IMR-90 (cell line): ENCODE measurements at regions of chr9 and their contacts with region 1.

Region 1: GRCh38 chr9:15873569-15874177 is 320.8 kb downstream of the CCDC171 start:
- DNase-seq: peak; percentile 74
- ATAC-seq: peak; percentile 70; the same call in 1 of the 2 replicates
- H3K4me3 ChIP-seq: no peak overlapping the region
- H3K27ac ChIP-seq: no peak overlapping the region
- H3K4me1 ChIP-seq: no peaks in the 10 kb centered on the region; the same call in 1 of the 2 replicates
- H3K27me3 ChIP-seq: no peaks in the 10 kb centered on the region
- CTCF ChIP-seq: peak; percentile 82
- POLR2A ChIP-seq: no peak
- RAD21 ChIP-seq: peak; percentile 87

Region 2: GRCh38 chr9:15231788-15232635 is 641.7 kb before region 1 on chr9:
- CTCF ChIA-PET with region 1: no interaction called
- POLR2A ChIA-PET with region 1: no interaction called
- dilution Hi-C with region 1: no loop called
- in situ Hi-C with region 1: no loop called
- intact Hi-C with region 1: no loop called
- DNase-seq: no peak
- ATAC-seq: peak; percentile 59
- H3K4me3 ChIP-seq: no peak overlapping the region
- H3K27ac ChIP-seq: no peak overlapping the region
- H3K4me1 ChIP-seq: no peaks in the 10 kb centered on the region
- H3K27me3 ChIP-seq: no peaks in the 10 kb centered on the region
- CTCF ChIP-seq: peak; percentile 48
- POLR2A ChIP-seq: no peak
- RAD21 ChIP-seq: peak; percentile 35; the same call in 1 of the 2 replicates

Region 3: GRCh38 chr9:15606643-15607472 is 266.8 kb before region 1 on chr9:
- CTCF ChIA-PET with region 1: no interaction called
- POLR2A ChIA-PET with region 1: no interaction called
- dilution Hi-C with region 1: no loop called
- in situ Hi-C with region 1: no loop called
- intact Hi-C with region 1: no loop called
- DNase-seq: peak; percentile 35
- ATAC-seq: peak; percentile 64; the same call in 1 of the 2 replicates
- H3K4me3 ChIP-seq: no peak overlapping the region
- H3K27ac ChIP-seq: no peak overlapping the region
- H3K4me1 ChIP-seq: no peaks in the 10 kb centered on the region
- H3K27me3 ChIP-seq: no peaks in the 10 kb centered on the region
- CTCF ChIP-seq: peak; percentile 68
- POLR2A ChIP-seq: no peak
- RAD21 ChIP-seq: peak; percentile 58

Region 4: GRCh38 chr9:16039218-16039987 is 165.7 kb after region 1 on chr9:
- CTCF ChIA-PET with region 1: no interaction called
- POLR2A ChIA-PET with region 1: no interaction called
- dilution Hi-C with region 1: no loop called
- in situ Hi-C with region 1: no loop called
- intact Hi-C with region 1: no loop called
- DNase-seq: peak; percentile 51
- ATAC-seq: no peak
- H3K4me3 ChIP-seq: no peak overlapping the region
- H3K27ac ChIP-seq: peak overlapping the region; percentile 93
- H3K4me1 ChIP-seq: peaks cover 23% of the 10 kb centered on the region
- H3K27me3 ChIP-seq: no peaks in the 10 kb centered on the region
- CTCF ChIP-seq: peak; percentile 45
- POLR2A ChIP-seq: no peak
- RAD21 ChIP-seq: peak; percentile 38; the same call in 1 of the 2 replicates

Region 5: GRCh38 chr9:16131264-16131663 is 257.6 kb after region 1 on chr9:
- CTCF ChIA-PET with region 1: no interaction called
- POLR2A ChIA-PET with region 1: no interaction called
- dilution Hi-C with region 1: no loop called
- in situ Hi-C with region 1: no loop called
- intact Hi-C with region 1: loop called (anchors 1 kb)
- DNase-seq: peak; percentile 67
- ATAC-seq: no peak
- H3K4me3 ChIP-seq: no peak overlapping the region
- H3K27ac ChIP-seq: no peak overlapping the region
- H3K4me1 ChIP-seq: no peaks in the 10 kb centered on the region
- H3K27me3 ChIP-seq: no peaks in the 10 kb centered on the region
- CTCF ChIP-seq: peak; percentile 53
- POLR2A ChIP-seq: no peak
- RAD21 ChIP-seq: peak; percentile 68

Region 6: DNA sequence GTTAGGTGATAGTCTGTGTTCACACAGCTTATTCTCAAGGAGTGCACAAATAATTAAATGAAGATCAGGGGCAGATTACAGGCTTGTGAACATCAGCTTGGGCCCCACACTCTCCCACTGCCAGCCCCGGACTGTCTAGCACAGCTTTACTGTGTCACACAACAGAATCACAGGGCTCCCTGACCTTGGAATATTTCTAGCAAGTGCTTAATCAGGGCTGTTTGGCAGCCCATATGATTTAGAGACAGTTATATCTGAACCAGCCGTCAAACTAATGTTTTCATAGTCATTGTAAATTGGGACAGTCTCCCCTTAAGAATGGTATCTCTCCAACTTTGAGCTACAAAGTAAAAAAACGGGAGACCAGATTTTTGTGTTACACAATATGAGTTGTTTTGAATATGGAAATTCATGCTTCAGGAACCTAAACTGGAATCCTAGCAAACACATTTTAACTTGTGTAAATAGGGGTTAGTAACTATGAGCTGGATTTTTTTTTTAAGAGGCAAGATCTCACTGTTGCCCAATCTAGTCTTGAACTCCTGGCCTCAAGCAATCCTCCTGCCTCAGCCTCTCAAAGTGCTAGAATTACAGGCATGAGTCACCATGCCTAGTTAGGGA is 479.2 kb after region 1 on chr9:
- CTCF ChIA-PET with region 1: no interaction called
- POLR2A ChIA-PET with region 1: no interaction called
- dilution Hi-C with region 1: no loop called
- in situ Hi-C with region 1: no loop called
- intact Hi-C with region 1: loop called (anchors 1 kb)
- DNase-seq: peak; percentile 67
- ATAC-seq: peak; percentile 76
- H3K4me3 ChIP-seq: no peak overlapping the region
- H3K27ac ChIP-seq: peak overlapping the region; percentile 51; the same call in 1 of the 2 replicates
- H3K4me1 ChIP-seq: peaks cover 14% of the 10 kb centered on the region; the same call in 1 of the 2 replicates
- H3K27me3 ChIP-seq: no peaks in the 10 kb centered on the region
- CTCF ChIP-seq: no peak
- POLR2A ChIP-seq: no peak
- RAD21 ChIP-seq: no peak

Region 7: DNA sequence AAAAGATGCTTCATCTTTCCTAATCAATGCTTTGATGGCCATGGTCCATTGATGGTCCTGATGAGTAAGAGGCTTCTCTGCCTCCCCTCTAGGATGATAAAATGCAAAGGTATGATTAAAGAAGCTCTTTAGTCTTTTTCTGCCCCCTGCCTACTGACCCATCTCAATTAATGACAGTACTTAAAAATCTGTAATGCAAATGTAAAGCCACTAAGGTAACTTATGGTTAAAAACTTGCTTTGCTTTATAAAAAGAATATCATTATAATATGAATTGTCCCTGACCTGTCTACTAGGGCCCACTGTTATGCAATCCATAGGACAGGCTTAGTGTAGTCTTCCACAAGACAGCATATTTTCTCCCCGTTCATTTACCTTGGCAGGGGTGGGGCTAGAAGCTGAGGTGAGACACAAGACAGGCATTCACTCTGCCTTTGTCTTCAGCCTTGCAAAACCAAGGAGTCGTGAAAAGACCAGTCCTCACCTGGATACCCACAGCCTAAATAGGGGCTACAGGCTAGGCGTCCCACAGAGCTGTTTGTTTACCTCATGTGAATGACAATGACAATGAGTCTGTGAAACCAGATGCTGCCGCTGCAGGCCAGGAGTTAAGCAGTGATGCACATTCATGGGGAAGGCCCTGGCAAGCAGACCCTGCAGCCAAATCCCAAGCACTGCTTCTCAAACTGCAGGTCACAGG is 936.4 kb after region 1 on chr9:
- CTCF ChIA-PET with region 1: no interaction called
- POLR2A ChIA-PET with region 1: no interaction called
- dilution Hi-C with region 1: no loop called
- in situ Hi-C with region 1: no loop called
- intact Hi-C with region 1: no loop called
- DNase-seq: no peak
- ATAC-seq: no peak
- H3K4me3 ChIP-seq: no peak overlapping the region
- H3K27ac ChIP-seq: no peak overlapping the region
- H3K4me1 ChIP-seq: peaks cover under 1% of the 10 kb centered on the region; the same call in 1 of the 2 replicates
- H3K27me3 ChIP-seq: no peaks in the 10 kb centered on the region
- CTCF ChIP-seq: no peak
- POLR2A ChIP-seq: no peak
- RAD21 ChIP-seq: no peak